Breast epithelium (tissue), 4 donors: ENCODE measurements at regions of chr10 and their contacts with region 1.

Region 1: GRCh38 chr10:127906548-127907377 is at the start of gene PTPRE:
- DNase-seq: peak; percentile 61 to 63
- H3K4me3 ChIP-seq: peak within 1 kb of the TSS; percentile 61 to 84 (median 73)
- H3K27ac ChIP-seq: peak within 1 kb of the TSS; percentile 83 to 93
- H3K4me1 ChIP-seq: peaks cover 5 to 9% of the 10 kb centered on the region in 2 donors
- H3K27me3 ChIP-seq: no peaks in the 10 kb centered on the region
- CTCF ChIP-seq: peak; percentile 46 to 97 (median 79)
- POLR2A ChIP-seq: no peak
- total RNA-seq, gene PTPRE: 11.8 to 42.9 (median 25.6) TPM

Region 2: GRCh38 chr10:128011175-128011979 is 104.6 kb after region 1 on chr10:
- intact Hi-C with region 1: loop called (anchors 5 kb)
- DNase-seq: peak; percentile 59 to 83
- H3K4me3 ChIP-seq: peak overlapping the region in 1 of 3 donors; percentile 47
- H3K27ac ChIP-seq: no peak overlapping the region
- H3K4me1 ChIP-seq: no peaks in the 10 kb centered on the region
- H3K27me3 ChIP-seq: no peaks in the 10 kb centered on the region
- CTCF ChIP-seq: peak; percentile 85 to 97 (median 94)
- POLR2A ChIP-seq: no peak